ENCODE measurements at regions of chr9 and their contacts with region 1.

Region 1: GRCh38 chr9:90914868-90915483 is 113.4 kb downstream of the SYK start:
- DNase-seq: peak; percentile 73 to 87
- ATAC-seq: peak; percentile 89
- H3K4me3 ChIP-seq: no peak overlapping the region
- H3K27ac ChIP-seq: no peak overlapping the region
- H3K4me1 ChIP-seq: peaks cover 0 to under 1% of the 10 kb centered on the region in 2 donors
- H3K27me3 ChIP-seq: no peaks in the 10 kb centered on the region

Region 2: GRCh38 chr9:91036826-91037510 is 122.0 kb after region 1 on chr9:
- intact Hi-C with region 1: loop called in 1 of 2 experiments (anchors 5 kb)
- DNase-seq: peak; percentile 85 to 90
- ATAC-seq: peak; percentile 94
- H3K4me3 ChIP-seq: no peak overlapping the region
- H3K27ac ChIP-seq: no peak overlapping the region
- H3K4me1 ChIP-seq: no peaks in the 10 kb centered on the region
- H3K27me3 ChIP-seq: no peaks in the 10 kb centered on the region

Region 3: DNA sequence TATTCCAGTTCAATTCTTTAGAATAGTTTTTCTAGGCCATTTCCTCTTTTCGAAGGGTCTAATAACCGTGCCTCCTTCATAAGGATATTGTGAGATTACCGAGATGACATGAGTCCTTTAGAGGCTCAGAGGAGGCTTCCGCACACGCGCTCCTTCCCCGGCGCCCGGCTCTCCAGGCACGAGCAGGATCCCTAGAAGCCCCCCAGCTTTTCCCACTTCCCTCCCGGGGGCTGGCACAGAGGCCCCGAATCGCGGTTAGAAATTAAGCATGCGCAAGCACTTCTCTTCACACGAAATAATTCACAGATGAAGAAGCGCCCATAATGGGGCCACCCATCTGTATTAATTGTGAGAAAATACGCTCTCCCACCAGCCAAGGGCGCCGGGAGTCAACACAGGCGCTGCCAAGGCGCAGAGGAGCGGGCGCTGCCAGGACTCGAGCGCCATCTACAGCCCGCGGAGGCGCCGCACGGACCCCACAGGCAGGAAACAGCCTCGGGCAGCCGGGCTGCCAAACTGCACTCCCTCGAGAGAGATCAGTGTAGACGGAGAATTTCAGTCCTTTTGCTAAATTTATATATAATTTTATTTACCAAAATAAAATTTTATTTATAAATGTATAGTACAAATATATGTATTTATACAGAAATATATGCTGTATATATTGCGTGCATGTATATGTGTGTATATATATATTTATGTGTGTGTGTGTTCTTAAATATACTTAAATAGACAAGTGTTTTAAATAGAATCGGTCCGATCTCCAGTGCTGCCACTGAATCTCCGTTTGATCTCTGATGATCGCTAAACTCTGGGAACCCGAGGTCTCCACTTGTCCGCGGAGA is 766.7 kb after region 1 on chr9:
- intact Hi-C with region 1: loop called (anchors 2 to 10 kb)
- DNase-seq: peak; percentile 82 to 90
- ATAC-seq: peak; percentile 85
- H3K4me3 ChIP-seq: no peak overlapping the region
- H3K27ac ChIP-seq: no peak overlapping the region
- H3K4me1 ChIP-seq: no peaks in the 10 kb centered on the region
- H3K27me3 ChIP-seq: no peaks in the 10 kb centered on the region

Region 4: GRCh38 chr9:91727316-91727861 is 812.4 kb after region 1 on chr9:
- intact Hi-C with region 1: loop called (anchors 2 to 10 kb)
- DNase-seq: no peak
- ATAC-seq: no peak
- H3K4me3 ChIP-seq: no peak overlapping the region
- H3K27ac ChIP-seq: no peak overlapping the region
- H3K4me1 ChIP-seq: no peaks in the 10 kb centered on the region
- H3K27me3 ChIP-seq: no peaks in the 10 kb centered on the region

Measured in aorta (tissue), 5 donors.